ENCODE measurements at regions of chr1 and their contacts with region 1.

Region 1: GRCh38 chr1:202348509-202349205 is at the start of gene PPP1R12B:
- DNase-seq: peak; percentile 97 to 99
- H3K4me3 ChIP-seq: peak within 1 kb of the TSS; percentile 77
- H3K4me3 Mint-ChIP-seq: peak within 1 kb of the TSS; percentile 100
- H3K27ac Mint-ChIP-seq: peak within 1 kb of the TSS; percentile 98
- H3K4me1 ChIP-seq: peaks cover 9% of the 10 kb centered on the region
- H3K4me1 Mint-ChIP-seq: peaks cover 36% of the 10 kb centered on the region
- H3K27me3 ChIP-seq: no peaks in the 10 kb centered on the region
- H3K27me3 Mint-ChIP-seq: no peaks in the 10 kb centered on the region
- CTCF ChIP-seq: no peak
- total RNA-seq, gene PPP1R12B: 16.4 and 22.4 TPM in 2 replicates

Region 2: GRCh38 chr1:202376247-202376646 is 27.6 kb after region 1 on chr1:
- CTCF ChIA-PET with region 1: no interaction called
- POLR2A ChIA-PET with region 1: no interaction called
- intact Hi-C with region 1: loop called (anchors 1 kb)
- DNase-seq: no peak
- H3K4me3 ChIP-seq: no peak overlapping the region
- H3K4me3 Mint-ChIP-seq: no peak overlapping the region
- H3K27ac Mint-ChIP-seq: no peak overlapping the region
- H3K4me1 ChIP-seq: peaks cover 15% of the 10 kb centered on the region
- H3K4me1 Mint-ChIP-seq: peaks cover 31% of the 10 kb centered on the region
- H3K27me3 ChIP-seq: no peaks in the 10 kb centered on the region
- H3K27me3 Mint-ChIP-seq: no peaks in the 10 kb centered on the region
- CTCF ChIP-seq: no peak

Region 3: GRCh38 chr1:202438432-202439174 is 89.9 kb after region 1 on chr1:
- CTCF ChIA-PET with region 1: no interaction called
- POLR2A ChIA-PET with region 1: no interaction called
- intact Hi-C with region 1: loop called (anchors 10 kb)
- DNase-seq: no peak
- H3K4me3 ChIP-seq: no peak overlapping the region
- H3K4me3 Mint-ChIP-seq: no peak overlapping the region
- H3K27ac Mint-ChIP-seq: no peak overlapping the region
- H3K4me1 ChIP-seq: no peaks in the 10 kb centered on the region
- H3K4me1 Mint-ChIP-seq: peaks cover 2% of the 10 kb centered on the region
- H3K27me3 ChIP-seq: no peaks in the 10 kb centered on the region
- H3K27me3 Mint-ChIP-seq: no peaks in the 10 kb centered on the region
- CTCF ChIP-seq: no peak

Region 4: DNA sequence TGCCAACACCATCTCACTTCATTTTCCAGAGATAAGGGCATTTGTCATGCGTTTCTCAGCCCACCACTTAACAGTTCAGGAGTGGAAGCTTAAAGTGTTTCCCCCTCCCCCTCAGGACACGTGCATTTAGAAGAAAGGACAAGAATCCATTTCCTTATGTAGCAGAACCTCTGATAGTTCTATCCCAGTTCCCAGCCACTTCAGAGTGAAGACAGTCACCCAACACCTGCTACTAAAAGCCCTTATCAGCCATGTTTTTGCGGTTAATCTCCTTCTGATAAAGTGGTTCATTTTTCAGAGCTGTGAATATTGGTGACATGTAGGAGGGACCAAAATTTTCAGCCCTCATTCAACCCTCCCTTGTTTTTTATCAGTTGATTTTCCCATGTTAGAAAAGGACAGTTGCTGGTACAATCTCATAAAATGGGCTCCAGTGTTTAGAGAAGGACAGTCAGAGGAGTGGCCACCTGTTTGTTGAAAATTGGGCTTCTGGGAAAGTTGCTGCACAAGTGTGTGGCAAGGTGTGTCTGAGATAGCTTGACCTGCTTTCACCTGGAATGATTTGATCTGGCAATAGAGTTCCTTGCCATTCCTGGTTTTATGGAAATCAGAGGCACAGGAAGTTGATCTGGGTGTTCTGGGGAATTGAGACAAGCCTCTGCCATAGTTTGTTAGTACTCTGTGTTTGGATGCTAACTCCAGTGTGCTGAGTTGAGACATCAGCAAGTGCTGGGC is 113.9 kb after region 1 on chr1:
- CTCF ChIA-PET with region 1: no interaction called
- POLR2A ChIA-PET with region 1: no interaction called
- intact Hi-C with region 1: loop called (anchors 5 kb)
- DNase-seq: no peak
- H3K4me3 ChIP-seq: no peak overlapping the region
- H3K4me3 Mint-ChIP-seq: no peak overlapping the region
- H3K27ac Mint-ChIP-seq: no peak overlapping the region
- H3K4me1 ChIP-seq: peaks cover 8% of the 10 kb centered on the region
- H3K4me1 Mint-ChIP-seq: peaks cover 8% of the 10 kb centered on the region
- H3K27me3 ChIP-seq: no peaks in the 10 kb centered on the region
- H3K27me3 Mint-ChIP-seq: no peaks in the 10 kb centered on the region
- CTCF ChIP-seq: no peak

Region 5: GRCh38 chr1:202599677-202600431 is 251.2 kb after region 1 on chr1:
- CTCF ChIA-PET with region 1: no interaction called
- POLR2A ChIA-PET with region 1: no interaction called
- intact Hi-C with region 1: loop called (anchors 2 kb)
- DNase-seq: peak; percentile 74 to 78
- H3K4me3 ChIP-seq: no peak overlapping the region
- H3K4me3 Mint-ChIP-seq: no peak overlapping the region
- H3K27ac Mint-ChIP-seq: no peak overlapping the region
- H3K4me1 ChIP-seq: no peaks in the 10 kb centered on the region
- H3K4me1 Mint-ChIP-seq: no peaks in the 10 kb centered on the region
- H3K27me3 ChIP-seq: no peaks in the 10 kb centered on the region
- H3K27me3 Mint-ChIP-seq: no peaks in the 10 kb centered on the region
- CTCF ChIP-seq: peak; percentile 72 to 88